Transverse colon (tissue), 4 donors: ENCODE measurements at regions of chr6 and their contacts with region 1.

Region 1: DNA sequence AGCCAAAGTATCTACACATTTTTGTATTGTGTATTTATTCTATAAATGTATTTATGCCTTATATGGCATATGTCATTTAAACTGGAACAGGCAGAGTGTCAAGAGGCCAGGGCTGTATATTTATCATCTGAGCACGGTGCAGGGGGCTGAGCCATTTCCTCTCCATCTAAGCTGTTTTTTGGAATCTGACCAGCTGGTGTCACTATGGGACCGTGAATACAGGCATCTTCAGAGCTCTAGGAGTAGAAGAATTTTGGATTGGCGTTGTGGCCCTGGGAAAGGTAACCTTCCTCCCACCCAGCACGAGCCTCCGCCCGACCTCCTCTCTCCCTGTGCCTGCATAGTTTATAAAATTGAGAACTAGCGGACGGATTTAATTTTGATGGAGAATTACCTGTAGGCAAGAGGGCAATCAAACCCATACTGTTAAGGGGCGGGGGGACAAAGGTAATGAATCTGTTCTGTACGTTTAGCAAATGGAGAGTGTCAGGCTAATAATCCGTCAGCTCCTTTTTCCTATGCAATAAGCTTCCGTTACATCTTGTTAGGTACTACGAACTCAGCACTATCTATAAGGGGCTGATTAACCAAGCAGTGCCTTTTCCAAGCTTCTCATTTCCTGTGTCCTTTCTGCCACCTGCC is 29.0 kb upstream of the EEF1E1 start:
- DNase-seq: peak; percentile 39
- H3K4me3 ChIP-seq: no peak overlapping the region
- H3K27ac ChIP-seq: no peak overlapping the region
- H3K4me1 ChIP-seq: no peaks in the 10 kb centered on the region
- H3K27me3 ChIP-seq: peaks cover 16% of the 10 kb centered on the region
- CTCF ChIP-seq: peak; percentile 31 to 55 (median 40)
- EP300 ChIP-seq: no peak
- POLR2A ChIP-seq: no peak

Region 2: GRCh38 chr6:8149350-8149749 is 18.0 kb after region 1 on chr6:
- in situ Hi-C with region 1: no loop called
- intact Hi-C with region 1: no loop called
- DNase-seq: no peak
- H3K4me3 ChIP-seq: no peak overlapping the region
- H3K27ac ChIP-seq: no peak overlapping the region
- H3K4me1 ChIP-seq: no peaks in the 10 kb centered on the region
- H3K27me3 ChIP-seq: no peaks in the 10 kb centered on the region
- CTCF ChIP-seq: no peak
- EP300 ChIP-seq: no peak
- POLR2A ChIP-seq: no peak

Region 3: DNA sequence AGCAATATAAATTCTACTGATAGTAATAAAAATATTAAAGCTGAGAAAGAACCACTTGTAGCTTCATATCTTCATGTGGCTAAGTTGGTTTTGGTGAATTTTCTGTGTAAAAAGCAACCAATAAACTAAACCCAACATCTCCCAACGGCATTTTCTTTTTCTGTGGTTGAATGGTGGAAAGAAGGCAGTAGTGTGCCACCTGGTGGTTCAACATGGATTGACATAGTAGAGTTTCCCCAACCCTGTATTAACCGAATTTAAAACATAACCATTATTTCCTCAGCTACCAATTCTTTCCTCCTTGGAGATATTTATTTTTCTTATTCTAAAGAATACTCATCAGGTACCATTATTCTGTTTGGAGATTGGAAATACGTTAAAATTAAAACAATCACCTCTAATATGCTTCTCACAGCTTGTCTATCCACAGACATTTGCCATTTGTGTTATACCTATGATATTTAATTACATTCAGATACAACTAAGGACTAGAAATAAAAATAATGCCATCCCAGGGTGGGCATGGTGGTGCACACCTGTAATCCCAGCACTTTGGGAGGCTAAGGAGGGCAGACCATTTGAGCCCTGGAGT is 88.1 kb after region 1 on chr6:
- in situ Hi-C with region 1: loop called in 3 of 4 experiments (anchors 5 to 10 kb)
- intact Hi-C with region 1: no loop called
- DNase-seq: peak; percentile 33
- H3K4me3 ChIP-seq: no peak overlapping the region
- H3K27ac ChIP-seq: no peak overlapping the region
- H3K4me1 ChIP-seq: no peaks in the 10 kb centered on the region
- H3K27me3 ChIP-seq: peaks cover 5% of the 10 kb centered on the region
- CTCF ChIP-seq: peak; percentile 73 to 83 (median 76)
- EP300 ChIP-seq: no peak
- POLR2A ChIP-seq: no peak

Region 4: GRCh38 chr6:8229915-8230756 is 98.8 kb after region 1 on chr6:
- in situ Hi-C with region 1: loop called in 2 of 4 experiments (anchors 10 kb)
- intact Hi-C with region 1: no loop called
- DNase-seq: no peak
- H3K4me3 ChIP-seq: no peak overlapping the region
- H3K27ac ChIP-seq: no peak overlapping the region
- H3K4me1 ChIP-seq: no peaks in the 10 kb centered on the region
- H3K27me3 ChIP-seq: no peaks in the 10 kb centered on the region
- CTCF ChIP-seq: no peak
- EP300 ChIP-seq: no peak
- POLR2A ChIP-seq: no peak

Region 5: DNA sequence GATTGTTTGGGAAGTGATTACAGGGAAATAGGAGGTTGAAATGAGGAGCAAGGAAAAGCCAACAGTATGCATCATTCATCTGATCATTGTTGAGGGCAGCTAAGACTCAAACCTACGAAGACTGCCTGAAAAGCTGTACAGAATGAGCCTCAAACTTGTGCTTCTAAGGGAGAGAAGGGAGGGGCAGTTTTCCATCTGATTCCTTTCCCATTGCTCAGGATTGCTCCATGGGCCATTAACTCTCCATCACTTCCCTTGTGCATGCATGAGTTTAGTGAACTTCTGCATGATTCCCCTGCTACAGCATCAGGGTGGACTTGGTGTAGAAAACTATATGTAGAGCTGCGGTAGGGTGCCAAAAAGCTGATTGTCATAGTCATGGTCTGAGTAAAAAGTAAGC is 1046.7 kb after region 1 on chr6:
- in situ Hi-C with region 1: no loop called
- intact Hi-C with region 1: no loop called
- DNase-seq: no peak
- H3K4me3 ChIP-seq: no peak overlapping the region
- H3K27ac ChIP-seq: no peak overlapping the region
- H3K4me1 ChIP-seq: no peaks in the 10 kb centered on the region
- H3K27me3 ChIP-seq: no peaks in the 10 kb centered on the region
- CTCF ChIP-seq: no peak
- EP300 ChIP-seq: no peak
- POLR2A ChIP-seq: no peak